CD8-positive, alpha-beta T cell (primary cell): ENCODE measurements at regions of chr6 and their contacts with region 1.

Region 1: GRCh38 chr6:268394-268935 is 23.8 kb upstream of the DUSP22 start:
- DNase-seq: no peak
- ATAC-seq: no peak
- H3K4me3 ChIP-seq: no peak overlapping the region
- H3K4me3 Mint-ChIP-seq: no peak overlapping the region
- H3K27ac ChIP-seq: no peak overlapping the region
- H3K27ac Mint-ChIP-seq: no peak overlapping the region
- H3K4me1 ChIP-seq: peaks cover 10% of the 10 kb centered on the region
- H3K4me1 Mint-ChIP-seq: peaks cover 27% of the 10 kb centered on the region
- H3K27me3 ChIP-seq: no peaks in the 10 kb centered on the region
- H3K27me3 Mint-ChIP-seq: no peaks in the 10 kb centered on the region
- CTCF ChIP-seq: no peak

Region 2: GRCh38 chr6:183668-184067 is 84.8 kb before region 1 on chr6:
- CTCF ChIA-PET with region 1: no interaction called
- POLR2A ChIA-PET with region 1: no interaction called
- intact Hi-C with region 1: no loop called
- DNase-seq: no peak
- ATAC-seq: no peak
- H3K4me3 ChIP-seq: no peak overlapping the region
- H3K4me3 Mint-ChIP-seq: no peak overlapping the region
- H3K27ac ChIP-seq: no peak overlapping the region
- H3K27ac Mint-ChIP-seq: no peak overlapping the region
- H3K4me1 ChIP-seq: peaks cover 14% of the 10 kb centered on the region
- H3K4me1 Mint-ChIP-seq: peaks cover 20% of the 10 kb centered on the region
- H3K27me3 ChIP-seq: no peaks in the 10 kb centered on the region
- H3K27me3 Mint-ChIP-seq: no peaks in the 10 kb centered on the region
- CTCF ChIP-seq: no peak

Region 3: GRCh38 chr6:251920-252319 is 16.5 kb before region 1 on chr6:
- CTCF ChIA-PET with region 1: no interaction called
- POLR2A ChIA-PET with region 1: no interaction called
- intact Hi-C with region 1: loop called in 1 of 2 experiments (anchors 2 kb)
- DNase-seq: no peak
- ATAC-seq: peak; percentile 38
- H3K4me3 ChIP-seq: no peak overlapping the region
- H3K4me3 Mint-ChIP-seq: no peak overlapping the region
- H3K27ac ChIP-seq: no peak overlapping the region
- H3K27ac Mint-ChIP-seq: no peak overlapping the region
- H3K4me1 ChIP-seq: no peaks in the 10 kb centered on the region
- H3K4me1 Mint-ChIP-seq: peaks cover 32% of the 10 kb centered on the region
- H3K27me3 ChIP-seq: no peaks in the 10 kb centered on the region
- H3K27me3 Mint-ChIP-seq: no peaks in the 10 kb centered on the region
- CTCF ChIP-seq: no peak

Region 4: GRCh38 chr6:319177-320131 is 51.0 kb after region 1 on chr6:
- CTCF ChIA-PET with region 1: no interaction called
- POLR2A ChIA-PET with region 1: no interaction called
- intact Hi-C with region 1: no loop called
- DNase-seq: peak in 1 of 9 experiments; percentile 5
- ATAC-seq: no peak
- H3K4me3 ChIP-seq: no peak overlapping the region
- H3K4me3 Mint-ChIP-seq: no peak overlapping the region
- H3K27ac ChIP-seq: no peak overlapping the region
- H3K27ac Mint-ChIP-seq: no peak overlapping the region
- H3K4me1 ChIP-seq: no peaks in the 10 kb centered on the region
- H3K4me1 Mint-ChIP-seq: peaks cover 6% of the 10 kb centered on the region
- H3K27me3 ChIP-seq: no peaks in the 10 kb centered on the region
- H3K27me3 Mint-ChIP-seq: no peaks in the 10 kb centered on the region
- CTCF ChIP-seq: no peak

Region 5: DNA sequence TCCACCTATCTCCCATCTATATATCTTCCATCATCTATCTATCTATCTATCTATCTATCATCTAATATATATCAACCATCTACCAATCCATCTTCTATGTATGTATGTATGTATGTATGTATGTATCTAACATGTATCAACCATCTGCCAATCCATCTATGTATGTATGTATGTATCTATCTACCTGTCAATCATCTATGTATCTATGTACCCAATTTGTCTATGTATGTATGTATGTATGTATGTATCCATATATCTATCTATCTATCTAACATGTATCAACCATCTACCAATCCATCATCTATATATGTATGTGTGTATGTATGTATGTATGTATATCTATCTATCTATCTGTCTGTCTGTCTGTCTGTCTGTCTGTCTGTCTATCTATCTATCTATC is 725.5 kb after region 1 on chr6:
- CTCF ChIA-PET with region 1: no interaction called
- POLR2A ChIA-PET with region 1: no interaction called
- intact Hi-C with region 1: no loop called
- DNase-seq: no peak
- ATAC-seq: no peak
- H3K4me3 ChIP-seq: no peak overlapping the region
- H3K4me3 Mint-ChIP-seq: no peak overlapping the region
- H3K27ac ChIP-seq: no peak overlapping the region
- H3K27ac Mint-ChIP-seq: no peak overlapping the region
- H3K4me1 ChIP-seq: no peaks in the 10 kb centered on the region
- H3K4me1 Mint-ChIP-seq: no peaks in the 10 kb centered on the region
- H3K27me3 ChIP-seq: no peaks in the 10 kb centered on the region
- H3K27me3 Mint-ChIP-seq: peaks cover 27% of the 10 kb centered on the region
- CTCF ChIP-seq: no peak